ENCODE measurements at regions of chr16 and their contacts with region 1.

Region 1: GRCh38 chr16:84599521-84600202 is 18.2 kb downstream of the COTL1 start:
- DNase-seq: peak in 8 of 10 donors; percentile 26 to 75 (median 41)
- ATAC-seq: peak; percentile 49 to 51
- H3K4me3 Mint-ChIP-seq: peak overlapping the region; percentile 79 to 96 (median 89)
- H3K27ac Mint-ChIP-seq: peak overlapping the region; percentile 89 to 99 (median 96)
- H3K4me1 Mint-ChIP-seq: peaks cover 53 to 91% (median 88%) of the 10 kb centered on the region in 4 donors
- H3K27me3 Mint-ChIP-seq: no peaks in the 10 kb centered on the region

Region 2: DNA sequence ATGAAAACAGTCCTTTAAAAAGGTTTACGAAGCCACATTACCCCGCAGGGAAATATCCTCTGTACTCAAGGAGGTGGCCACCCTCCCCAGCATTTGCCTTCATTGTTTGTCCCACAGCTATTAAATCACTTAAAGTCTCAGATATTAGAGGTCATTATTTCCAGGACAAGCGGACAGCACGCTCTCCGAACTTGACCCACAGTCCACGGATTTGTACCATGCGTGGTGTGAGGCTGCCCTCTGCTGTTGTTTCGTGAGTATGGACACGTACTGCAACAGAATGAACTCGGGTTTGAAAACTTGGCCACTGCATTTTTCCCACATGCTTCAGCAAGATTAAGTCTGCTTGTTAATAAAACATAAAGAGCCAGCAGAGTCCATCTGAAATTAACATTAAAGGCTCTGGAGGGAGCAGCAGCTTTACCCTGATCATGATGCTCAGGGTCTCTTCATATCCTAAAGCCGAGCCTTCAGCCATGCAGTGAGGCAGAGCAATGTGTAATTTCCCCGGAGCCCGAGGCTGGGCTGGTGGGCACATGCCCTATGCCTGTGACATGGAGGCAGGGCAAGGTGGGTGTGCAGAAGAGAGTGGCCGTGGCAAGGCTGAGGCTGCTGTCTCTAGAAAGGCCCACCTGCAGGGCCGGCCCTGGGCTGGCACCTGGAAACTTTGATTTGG is 114.9 kb before region 1 on chr16:
- POLR2A ChIA-PET with region 1: no interaction called
- DNase-seq: peak in 1 of 10 donors; percentile 52
- ATAC-seq: no peak
- H3K4me3 Mint-ChIP-seq: no peak overlapping the region
- H3K27ac Mint-ChIP-seq: no peak overlapping the region
- H3K4me1 Mint-ChIP-seq: no peaks in the 10 kb centered on the region
- H3K27me3 Mint-ChIP-seq: no peaks in the 10 kb centered on the region

Region 3: GRCh38 chr16:84511180-84511824 is 88.4 kb before region 1 on chr16:
- POLR2A ChIA-PET with region 1: interaction called, 107 read pairs
- DNase-seq: peak; percentile 63 to 91 (median 86)
- ATAC-seq: peak; percentile 20 to 21
- H3K4me3 Mint-ChIP-seq: peak overlapping the region in 8 of 10 donors; percentile 3 to 64 (median 52)
- H3K27ac Mint-ChIP-seq: peak overlapping the region in 9 of 10 donors; percentile 80 to 92 (median 86)
- H3K4me1 Mint-ChIP-seq: peaks cover 33 to 87% (median 71%) of the 10 kb centered on the region in 4 donors
- H3K27me3 Mint-ChIP-seq: no peaks in the 10 kb centered on the region